ENCODE measurements at regions of chr1 and their contacts with region 1.

Region 1: GRCh38 chr1:35641233-35641866 is at the start of gene PSMB2:
- DNase-seq: peak; percentile 89 to 95 (median 94)
- H3K4me3 ChIP-seq: peak within 1 kb of the TSS; percentile 59 to 100 (median 95)
- H3K27ac ChIP-seq: peak within 1 kb of the TSS; percentile 59 to 97 (median 88)
- H3K27me3 ChIP-seq: no peaks in the 10 kb centered on the region
- CTCF ChIP-seq: peak in 17 of 56 donors; percentile 7 to 38 (median 23)
- total RNA-seq, gene PSMB2: 24.1 to 67.0 (median 51.1) TPM

Region 2: DNA sequence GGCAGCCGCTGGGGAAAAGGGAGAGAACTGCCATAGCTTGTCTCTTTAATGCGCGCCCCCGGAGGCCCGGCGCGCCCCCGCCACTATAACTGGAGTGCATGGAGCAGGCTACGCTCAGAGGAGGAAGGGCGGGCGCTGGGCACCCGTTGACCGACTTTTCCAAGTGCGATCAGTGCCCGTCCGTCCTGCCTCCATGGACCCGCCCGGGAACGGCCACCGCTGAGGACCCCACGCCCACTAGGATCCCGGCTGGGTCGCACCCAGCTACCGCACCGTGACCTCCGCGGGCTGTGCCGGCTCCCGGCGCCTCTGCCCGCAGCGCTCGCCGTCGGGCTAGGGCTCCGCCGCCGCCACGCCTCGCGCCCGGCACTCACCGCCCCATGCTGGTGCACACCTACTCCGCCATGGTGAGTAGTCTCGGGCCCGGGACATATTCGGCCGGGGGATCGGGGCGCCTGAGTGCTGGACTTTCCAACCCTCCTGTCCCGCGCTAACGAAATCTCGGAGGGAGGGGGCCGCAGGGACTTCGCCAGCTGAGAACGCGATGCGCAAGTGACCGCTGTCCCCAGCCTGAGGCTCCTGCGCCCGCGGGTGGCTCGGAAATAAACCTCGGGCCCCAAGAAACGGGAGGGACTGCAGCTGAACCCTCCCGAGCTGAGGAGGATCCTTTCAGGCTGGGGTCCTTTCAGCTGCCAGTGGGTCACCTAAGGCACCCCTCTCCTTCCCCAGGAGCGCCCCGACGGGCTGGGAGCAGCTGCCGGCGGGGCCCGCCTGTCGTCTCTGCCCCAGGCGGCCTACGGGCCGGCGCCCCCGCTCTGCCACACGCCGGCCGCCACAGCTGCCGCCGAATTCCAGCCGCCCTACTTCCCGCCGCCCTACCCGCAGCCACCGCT is 67.9 kb before region 1 on chr1 and contains the start of gene TFAP2E:
- intact Hi-C with region 1: loop called (anchors 5 kb)
- DNase-seq: peak in 9 of 10 donors; percentile 57 to 80 (median 76)
- H3K4me3 ChIP-seq: peak within 1 kb of the TSS; percentile 36 to 78 (median 64)
- H3K27ac ChIP-seq: peak within 1 kb of the TSS in 1 of 59 donors; percentile 53
- H3K27me3 ChIP-seq: no peaks in the 10 kb centered on the region
- CTCF ChIP-seq: peak in 6 of 56 donors; percentile 14 to 29 (median 20)
- total RNA-seq, gene TFAP2E: 2.8 to 21.5 (median 9.1) TPM

Region 3: GRCh38 chr1:35715568-35716002 is 74.2 kb after region 1 on chr1:
- intact Hi-C with region 1: loop called (anchors 2 kb)
- DNase-seq: peak; percentile 69 to 86 (median 78)
- H3K4me3 ChIP-seq: peak overlapping the region in 57 of 59 donors; percentile 5 to 99 (median 90)
- H3K27ac ChIP-seq: peak overlapping the region in 53 of 59 donors; percentile 18 to 98 (median 87)
- H3K27me3 ChIP-seq: no peaks in the 10 kb centered on the region
- CTCF ChIP-seq: peak; percentile 71 to 95 (median 86)

Measured in dorsolateral prefrontal cortex (tissue), 120 donors.